MCF 10A (cell line): ENCODE measurements at regions of chr20 and their contacts with region 1.

Region 1: GRCh38 chr20:56554869-56555268 is 21.8 kb downstream of the FAM209B start:
- DNase-seq: peak; percentile 99
- H3K4me3 Mint-ChIP-seq: peak overlapping the region; percentile 55
- H3K27ac Mint-ChIP-seq: peak overlapping the region; percentile 87
- H3K4me1 Mint-ChIP-seq: peaks cover 11% of the 10 kb centered on the region
- H3K27me3 Mint-ChIP-seq: peaks cover 10% of the 10 kb centered on the region
- CTCF ChIP-seq: no peak

Region 2: DNA sequence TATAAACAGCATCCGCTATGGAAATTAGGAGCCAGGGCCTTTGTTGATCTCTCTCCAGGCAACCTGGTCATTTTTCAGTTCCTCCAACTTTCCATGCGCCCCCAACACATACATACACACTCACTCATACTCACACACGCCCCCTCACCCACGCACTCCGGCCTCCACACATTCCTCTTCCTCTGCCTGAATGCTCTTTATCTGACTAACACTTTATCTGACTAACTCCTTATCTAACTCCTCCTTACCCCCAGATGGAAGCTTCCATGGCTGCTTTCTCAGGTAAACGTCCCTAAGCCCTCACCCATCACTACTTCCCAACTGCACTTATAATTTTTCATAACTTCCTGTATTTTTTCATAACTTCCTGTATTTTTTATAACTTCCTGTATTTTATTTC is 125.4 kb before region 1 on chr20:
- CTCF ChIA-PET with region 1: no interaction called
- POLR2A ChIA-PET with region 1: no interaction called
- intact Hi-C with region 1: no loop called
- DNase-seq: no peak
- H3K4me3 Mint-ChIP-seq: no peak overlapping the region
- H3K27ac Mint-ChIP-seq: no peak overlapping the region
- H3K4me1 Mint-ChIP-seq: peaks cover 19% of the 10 kb centered on the region
- H3K27me3 Mint-ChIP-seq: peaks cover 14% of the 10 kb centered on the region
- CTCF ChIP-seq: no peak

Region 3: DNA sequence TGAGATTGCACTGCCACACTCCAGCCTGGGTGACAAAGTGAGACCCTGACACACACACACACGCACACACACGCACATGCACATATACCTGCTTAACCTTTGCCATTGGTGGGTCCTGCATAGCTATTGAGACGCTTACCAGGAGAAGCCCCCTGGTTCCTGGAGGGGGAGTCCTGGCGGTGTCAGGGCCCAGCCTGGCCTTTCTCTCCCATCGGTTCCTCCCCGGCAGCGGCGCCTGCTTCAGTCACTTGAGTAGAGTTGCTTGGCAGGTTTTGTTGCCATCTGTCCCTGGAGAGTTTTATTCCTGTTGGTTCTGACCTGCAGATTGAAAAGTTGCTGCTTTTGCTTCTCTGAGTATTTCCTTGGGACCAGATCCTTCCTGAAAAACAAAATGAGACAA is 51.0 kb before region 1 on chr20:
- CTCF ChIA-PET with region 1: no interaction called
- POLR2A ChIA-PET with region 1: no interaction called
- intact Hi-C with region 1: no loop called
- DNase-seq: no peak
- H3K4me3 Mint-ChIP-seq: no peak overlapping the region
- H3K27ac Mint-ChIP-seq: no peak overlapping the region
- H3K4me1 Mint-ChIP-seq: no peaks in the 10 kb centered on the region
- H3K27me3 Mint-ChIP-seq: no peaks in the 10 kb centered on the region
- CTCF ChIP-seq: no peak

Region 4: DNA sequence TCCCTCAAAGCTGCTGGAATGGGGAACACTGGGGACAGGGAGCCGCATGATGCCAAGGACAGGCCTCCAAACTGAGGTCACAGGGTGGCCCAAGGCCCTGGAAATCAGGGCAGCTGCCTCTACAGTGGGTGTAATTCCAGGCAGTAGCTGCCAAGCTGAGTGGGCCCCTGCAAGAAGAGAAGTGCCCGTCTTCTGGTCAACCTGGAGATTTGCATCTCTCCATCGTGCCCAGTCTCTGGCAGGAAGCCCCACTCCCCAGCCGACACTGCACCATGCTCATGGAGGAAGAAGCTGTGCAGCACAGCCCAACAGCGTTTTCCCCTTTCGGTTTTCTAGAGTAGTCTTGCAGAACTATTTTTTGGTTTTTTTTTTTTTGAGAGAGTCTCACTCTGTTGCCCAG is 32.6 kb before region 1 on chr20:
- CTCF ChIA-PET with region 1: no interaction called
- POLR2A ChIA-PET with region 1: no interaction called
- intact Hi-C with region 1: no loop called
- DNase-seq: no peak
- H3K4me3 Mint-ChIP-seq: no peak overlapping the region
- H3K27ac Mint-ChIP-seq: no peak overlapping the region
- H3K4me1 Mint-ChIP-seq: no peaks in the 10 kb centered on the region
- H3K27me3 Mint-ChIP-seq: peaks cover 22% of the 10 kb centered on the region
- CTCF ChIP-seq: no peak

Region 5: DNA sequence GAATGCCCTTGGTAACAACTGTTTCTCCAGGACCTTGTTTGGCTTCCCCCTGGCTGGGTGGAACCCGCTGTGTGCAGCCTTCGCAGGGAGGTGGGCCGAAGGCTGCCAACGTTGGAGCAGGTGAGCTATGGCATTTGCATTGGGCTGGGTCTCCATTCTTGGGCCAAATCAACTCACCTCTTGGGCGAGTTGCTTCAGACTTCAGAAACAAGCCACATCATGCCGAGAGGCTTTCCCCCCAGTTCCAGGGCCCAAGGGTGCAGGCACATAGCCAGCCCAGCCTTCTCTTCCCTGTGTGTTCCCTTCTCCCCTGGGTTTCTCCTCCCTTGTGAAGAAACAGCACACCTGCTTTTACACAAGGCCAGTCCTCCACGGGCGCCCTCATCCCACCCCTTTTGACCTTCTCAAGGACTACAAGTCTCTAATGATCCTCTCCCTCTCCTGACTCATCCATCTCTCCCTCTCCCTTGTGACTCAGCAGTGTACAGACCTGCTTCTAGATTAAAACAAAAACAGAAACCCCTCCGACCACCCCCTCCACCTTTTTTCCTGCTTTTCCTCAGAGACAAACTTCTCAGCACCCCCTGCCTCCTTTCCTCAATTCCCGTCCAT is 19.8 kb after region 1 on chr20:
- CTCF ChIA-PET with region 1: interaction called, 301 read pairs
- POLR2A ChIA-PET with region 1: interaction called, 48 read pairs
- intact Hi-C with region 1: loop called (anchors 1 kb)
- DNase-seq: peak; percentile 92
- H3K4me3 Mint-ChIP-seq: no peak overlapping the region
- H3K27ac Mint-ChIP-seq: peak overlapping the region; percentile 71
- H3K4me1 Mint-ChIP-seq: peaks cover 18% of the 10 kb centered on the region
- H3K27me3 Mint-ChIP-seq: no peaks in the 10 kb centered on the region
- CTCF ChIP-seq: no peak

Region 6: DNA sequence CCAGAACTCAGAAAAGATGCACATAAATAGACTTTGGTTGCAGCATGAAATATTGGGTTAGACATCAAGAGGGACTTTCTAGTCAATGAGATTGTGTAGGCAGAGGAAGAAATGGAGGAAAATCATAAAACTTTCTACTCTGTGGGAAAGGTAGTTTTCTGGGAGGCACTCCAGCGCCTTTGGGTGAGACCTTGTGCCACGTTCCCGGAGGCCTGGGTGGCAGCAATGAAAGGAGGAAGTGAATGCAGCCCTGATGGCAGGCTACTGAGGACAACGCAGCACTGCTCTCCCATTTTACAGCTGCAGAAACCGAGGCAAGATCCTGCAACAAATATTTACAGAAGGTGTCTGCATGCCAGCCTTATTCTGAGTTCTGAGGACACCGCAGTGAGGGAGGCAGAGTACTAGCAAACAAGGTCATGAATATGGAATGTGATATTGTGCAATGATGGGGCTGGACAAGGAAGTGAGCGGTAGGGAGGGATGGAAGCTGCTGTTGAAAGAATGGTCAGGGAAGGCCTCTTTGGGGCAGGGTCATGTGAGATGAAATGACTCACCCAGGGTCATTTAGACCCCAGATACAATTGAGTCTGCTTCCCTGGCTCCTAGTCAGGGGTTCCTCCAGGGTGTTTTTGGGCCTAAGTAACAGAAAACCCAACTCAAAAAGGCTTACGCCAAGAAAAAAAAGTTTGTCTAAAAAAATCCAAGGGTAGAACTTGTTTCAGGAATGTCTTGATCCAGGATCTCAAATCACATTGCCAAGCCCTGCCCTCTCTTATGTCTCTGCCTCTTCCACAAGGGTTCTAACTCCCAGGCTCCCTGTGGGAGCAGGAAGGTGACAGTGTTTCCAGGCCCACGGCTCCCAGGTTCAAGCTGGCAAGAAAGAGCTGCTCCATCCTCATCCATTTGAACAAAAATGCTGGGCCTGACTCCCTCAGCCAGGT is 233.4 kb after region 1 on chr20:
- CTCF ChIA-PET with region 1: interaction called, 4 read pairs
- POLR2A ChIA-PET with region 1: no interaction called
- intact Hi-C with region 1: loop called (anchors 10 kb)
- DNase-seq: peak; percentile 97
- H3K4me3 Mint-ChIP-seq: peak overlapping the region; percentile 67
- H3K27ac Mint-ChIP-seq: peak overlapping the region; percentile 98
- H3K4me1 Mint-ChIP-seq: peaks cover 32% of the 10 kb centered on the region
- H3K27me3 Mint-ChIP-seq: no peaks in the 10 kb centered on the region
- CTCF ChIP-seq: no peak

Region 7: DNA sequence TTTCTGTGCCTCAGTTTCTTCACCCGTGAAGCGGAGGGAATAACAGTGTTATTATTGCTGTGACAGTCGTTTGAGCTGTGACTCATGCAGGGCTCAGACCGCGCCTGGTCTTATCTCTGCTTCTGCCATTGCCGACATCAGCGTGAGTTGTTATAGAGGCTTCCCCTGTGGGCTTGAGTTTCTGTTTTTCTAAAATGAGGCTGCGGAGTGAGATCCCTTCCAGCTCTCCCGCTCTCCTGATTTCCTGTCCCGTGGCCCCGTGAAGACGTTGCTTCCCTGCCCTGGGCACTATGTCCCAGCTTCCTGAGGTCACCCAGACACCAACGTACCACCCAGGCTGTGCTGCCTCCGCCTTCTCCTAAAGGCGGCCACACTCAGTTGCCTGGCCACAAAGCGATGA is 433.1 kb after region 1 on chr20:
- CTCF ChIA-PET with region 1: interaction called, 22 read pairs
- POLR2A ChIA-PET with region 1: interaction called, 3 read pairs
- intact Hi-C with region 1: no loop called
- DNase-seq: no peak
- H3K4me3 Mint-ChIP-seq: no peak overlapping the region
- H3K27ac Mint-ChIP-seq: no peak overlapping the region
- H3K4me1 Mint-ChIP-seq: peaks cover 8% of the 10 kb centered on the region
- H3K27me3 Mint-ChIP-seq: peaks cover 10% of the 10 kb centered on the region
- CTCF ChIP-seq: no peak

Region 8: DNA sequence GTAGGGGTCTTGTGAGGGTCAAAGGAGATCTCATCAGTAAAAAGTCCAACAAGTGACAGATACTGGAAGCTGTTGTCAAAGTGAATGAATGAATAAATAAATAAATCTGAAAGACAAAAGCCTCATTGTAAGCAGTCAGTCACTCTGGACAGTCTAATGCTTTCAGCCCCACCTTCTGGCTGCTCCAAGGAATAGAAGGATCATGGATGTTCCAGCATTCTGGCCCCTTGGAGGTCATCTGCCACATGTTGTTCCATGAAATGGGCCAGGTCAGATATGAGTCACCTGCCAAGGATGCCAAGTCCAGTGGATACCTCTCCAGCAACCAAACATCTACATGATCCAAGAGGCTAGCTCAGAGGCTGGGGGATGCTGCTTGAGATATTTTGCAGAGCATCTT is 525.9 kb after region 1 on chr20:
- CTCF ChIA-PET with region 1: interaction called, 11 read pairs
- POLR2A ChIA-PET with region 1: interaction called, 3 read pairs
- intact Hi-C with region 1: loop called (anchors 1 kb)
- DNase-seq: peak; percentile 32
- H3K4me3 Mint-ChIP-seq: no peak overlapping the region
- H3K27ac Mint-ChIP-seq: no peak overlapping the region
- H3K4me1 Mint-ChIP-seq: peaks cover 15% of the 10 kb centered on the region
- H3K27me3 Mint-ChIP-seq: peaks cover 18% of the 10 kb centered on the region
- CTCF ChIP-seq: peak; percentile 27

Region 9: GRCh38 chr20:57101577-57102559 is 547.0 kb after region 1 on chr20:
- CTCF ChIA-PET with region 1: no interaction called
- POLR2A ChIA-PET with region 1: no interaction called
- intact Hi-C with region 1: no loop called
- DNase-seq: no peak
- H3K4me3 Mint-ChIP-seq: no peak overlapping the region
- H3K27ac Mint-ChIP-seq: no peak overlapping the region
- H3K4me1 Mint-ChIP-seq: no peaks in the 10 kb centered on the region
- H3K27me3 Mint-ChIP-seq: peaks cover 58% of the 10 kb centered on the region
- CTCF ChIP-seq: no peak